CD8-positive, alpha-beta T cell (primary cell): ENCODE measurements at regions of chr15 and their contacts with region 1.

Region 1: GRCh38 chr15:70097337-70098169 is at the start of gene TLE3:
- DNase-seq: peak; percentile 93 to 99 (median 98)
- ATAC-seq: peak; percentile 55
- H3K4me3 ChIP-seq: peak within 1 kb of the TSS; percentile 81 to 89
- H3K4me3 Mint-ChIP-seq: peak within 1 kb of the TSS; percentile 99
- H3K27ac ChIP-seq: peak within 1 kb of the TSS; percentile 90
- H3K27ac Mint-ChIP-seq: peak within 1 kb of the TSS; percentile 98
- H3K4me1 ChIP-seq: peaks cover 51% of the 10 kb centered on the region
- H3K4me1 Mint-ChIP-seq: peaks cover 53% of the 10 kb centered on the region
- H3K27me3 ChIP-seq: peaks cover 0 to 6% of the 10 kb centered on the region in 2 experiments
- H3K27me3 Mint-ChIP-seq: no peaks in the 10 kb centered on the region
- CTCF ChIP-seq: peak; percentile 35
- total RNA-seq, gene TLE3: 198 to 201 TPM

Region 2: DNA sequence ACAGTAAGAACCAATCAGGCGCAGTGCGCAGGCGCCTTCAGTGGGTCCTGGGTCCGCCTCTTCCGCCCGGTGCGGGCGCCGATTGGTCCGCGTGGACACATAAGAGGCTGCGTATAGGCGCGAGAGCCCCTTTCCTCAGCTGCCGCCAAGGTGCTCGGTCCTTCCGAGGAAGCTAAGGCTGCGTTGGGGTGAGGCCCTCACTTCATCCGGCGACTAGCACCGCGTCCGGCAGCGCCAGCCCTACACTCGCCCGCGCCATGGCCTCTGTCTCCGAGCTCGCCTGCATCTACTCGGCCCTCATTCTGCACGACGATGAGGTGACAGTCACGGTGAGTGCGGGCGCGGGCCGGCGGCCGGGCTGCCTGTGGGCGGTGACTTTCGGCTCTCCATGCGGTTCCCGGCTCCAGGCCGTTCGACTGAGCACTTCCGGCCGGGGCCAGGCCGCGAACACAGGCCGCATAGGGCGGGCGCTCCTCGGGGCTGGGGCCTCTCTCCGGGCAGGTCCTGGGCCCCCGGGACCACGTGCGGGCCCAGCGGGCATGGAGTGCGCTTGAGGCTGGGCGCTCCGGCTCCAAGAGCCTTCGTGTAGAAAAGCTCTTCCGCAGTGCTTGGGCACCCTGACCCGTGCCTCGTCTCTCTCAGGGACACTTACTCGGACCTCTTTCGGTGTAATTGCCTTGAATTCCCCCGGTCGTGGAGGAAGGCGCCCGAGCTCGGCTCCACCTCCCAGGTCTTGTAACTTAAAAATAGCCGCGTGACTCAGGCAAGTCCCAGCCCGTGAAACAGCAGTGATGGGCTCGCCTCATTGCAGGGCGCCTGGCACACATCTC is 644.6 kb before region 1 on chr15 and contains the start of gene RPLP1:
- CTCF ChIA-PET with region 1: interaction called, 3 read pairs
- POLR2A ChIA-PET with region 1: interaction called, 5 read pairs
- intact Hi-C with region 1: loop called (anchors 5 kb)
- DNase-seq: peak; percentile 91 to 97 (median 95)
- ATAC-seq: peak; percentile 88
- H3K4me3 ChIP-seq: peak within 1 kb of the TSS; percentile 86 to 91
- H3K4me3 Mint-ChIP-seq: peak within 1 kb of the TSS; percentile 97
- H3K27ac ChIP-seq: peak within 1 kb of the TSS; percentile 75 to 92
- H3K27ac Mint-ChIP-seq: peak within 1 kb of the TSS; percentile 99
- H3K4me1 ChIP-seq: peaks cover 32% of the 10 kb centered on the region
- H3K4me1 Mint-ChIP-seq: peaks cover 47% of the 10 kb centered on the region
- H3K27me3 ChIP-seq: no peaks in the 10 kb centered on the region
- H3K27me3 Mint-ChIP-seq: no peaks in the 10 kb centered on the region
- CTCF ChIP-seq: no peak
- total RNA-seq, gene RPLP1: 2,675 to 2,824 TPM

Region 3: GRCh38 chr15:69713726-69714559 is 383.6 kb before region 1 on chr15:
- CTCF ChIA-PET with region 1: interaction called, 9 read pairs
- POLR2A ChIA-PET with region 1: interaction called, 39 read pairs
- intact Hi-C with region 1: loop called (anchors 1 to 2 kb)
- DNase-seq: peak; percentile 34 to 95 (median 77)
- ATAC-seq: peak; percentile 89
- H3K4me3 ChIP-seq: no peak overlapping the region
- H3K4me3 Mint-ChIP-seq: peak overlapping the region; percentile 20
- H3K27ac ChIP-seq: peak overlapping the region in 1 of 2 experiments; percentile 68
- H3K27ac Mint-ChIP-seq: peak overlapping the region; percentile 89
- H3K4me1 ChIP-seq: peaks cover 47% of the 10 kb centered on the region
- H3K4me1 Mint-ChIP-seq: peaks cover 66% of the 10 kb centered on the region
- H3K27me3 ChIP-seq: no peaks in the 10 kb centered on the region
- H3K27me3 Mint-ChIP-seq: no peaks in the 10 kb centered on the region
- CTCF ChIP-seq: no peak

Region 4: GRCh38 chr15:69760890-69761568 is 336.5 kb before region 1 on chr15:
- CTCF ChIA-PET with region 1: interaction called, 4 read pairs
- POLR2A ChIA-PET with region 1: interaction called, 66 read pairs
- intact Hi-C with region 1: loop called (anchors 1 kb)
- DNase-seq: peak; percentile 51 to 95 (median 82)
- ATAC-seq: peak; percentile 69
- H3K4me3 ChIP-seq: no peak overlapping the region
- H3K4me3 Mint-ChIP-seq: peak overlapping the region; percentile 53
- H3K27ac ChIP-seq: peak overlapping the region in 1 of 2 experiments; percentile 17
- H3K27ac Mint-ChIP-seq: peak overlapping the region; percentile 87
- H3K4me1 ChIP-seq: peaks cover 60% of the 10 kb centered on the region
- H3K4me1 Mint-ChIP-seq: peaks cover 69% of the 10 kb centered on the region
- H3K27me3 ChIP-seq: no peaks in the 10 kb centered on the region
- H3K27me3 Mint-ChIP-seq: no peaks in the 10 kb centered on the region
- CTCF ChIP-seq: no peak

Region 5: DNA sequence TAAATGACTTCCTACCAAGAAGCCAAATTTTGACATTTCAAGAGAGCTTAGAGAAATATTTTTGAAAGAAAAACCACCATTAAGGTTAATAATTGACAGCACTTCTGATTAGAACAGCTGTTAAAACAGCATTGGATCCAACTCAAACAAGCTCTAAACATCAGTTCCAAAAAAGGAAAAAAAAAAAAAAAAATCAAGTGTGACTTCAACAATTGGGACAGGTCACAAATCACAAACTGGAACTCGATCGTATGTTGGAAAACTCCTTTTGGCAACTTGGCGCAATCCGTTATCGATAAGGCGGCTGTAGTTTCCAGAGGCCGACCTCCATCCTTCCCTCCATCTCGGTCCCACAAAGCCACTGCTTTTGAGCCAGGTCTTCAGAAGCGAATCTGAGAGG is 17.7 kb before region 1 on chr15:
- CTCF ChIA-PET with region 1: no interaction called
- POLR2A ChIA-PET with region 1: interaction called, 3 read pairs
- intact Hi-C with region 1: loop called in 1 of 2 experiments (anchors 2 kb)
- DNase-seq: no peak
- ATAC-seq: no peak
- H3K4me3 ChIP-seq: no peak overlapping the region
- H3K4me3 Mint-ChIP-seq: no peak overlapping the region
- H3K27ac ChIP-seq: no peak overlapping the region
- H3K27ac Mint-ChIP-seq: no peak overlapping the region
- H3K4me1 ChIP-seq: peaks cover 24% of the 10 kb centered on the region
- H3K4me1 Mint-ChIP-seq: peaks cover 63% of the 10 kb centered on the region
- H3K27me3 ChIP-seq: no peaks in the 10 kb centered on the region
- H3K27me3 Mint-ChIP-seq: no peaks in the 10 kb centered on the region
- CTCF ChIP-seq: no peak

Region 6: GRCh38 chr15:70528270-70528706 is 430.7 kb after region 1 on chr15:
- CTCF ChIA-PET with region 1: no interaction called
- POLR2A ChIA-PET with region 1: interaction called, 6 read pairs
- intact Hi-C with region 1: loop called in 1 of 2 experiments (anchors 2 kb)
- DNase-seq: peak in 7 of 9 experiments; percentile 42 to 89 (median 67)
- ATAC-seq: peak; percentile 85
- H3K4me3 ChIP-seq: peak overlapping the region; percentile 7 to 40
- H3K4me3 Mint-ChIP-seq: peak overlapping the region; percentile 80
- H3K27ac ChIP-seq: peak overlapping the region; percentile 48 to 69
- H3K27ac Mint-ChIP-seq: peak overlapping the region; percentile 98
- H3K4me1 ChIP-seq: peaks cover 56% of the 10 kb centered on the region
- H3K4me1 Mint-ChIP-seq: peaks cover 80% of the 10 kb centered on the region
- H3K27me3 ChIP-seq: no peaks in the 10 kb centered on the region
- H3K27me3 Mint-ChIP-seq: no peaks in the 10 kb centered on the region
- CTCF ChIP-seq: no peak

Region 7: GRCh38 chr15:70650567-70651302 is 553.2 kb after region 1 on chr15:
- CTCF ChIA-PET with region 1: no interaction called
- POLR2A ChIA-PET with region 1: no interaction called
- intact Hi-C with region 1: no loop called
- DNase-seq: no peak
- ATAC-seq: no peak
- H3K4me3 ChIP-seq: no peak overlapping the region
- H3K4me3 Mint-ChIP-seq: no peak overlapping the region
- H3K27ac ChIP-seq: no peak overlapping the region
- H3K27ac Mint-ChIP-seq: no peak overlapping the region
- H3K4me1 ChIP-seq: no peaks in the 10 kb centered on the region
- H3K4me1 Mint-ChIP-seq: no peaks in the 10 kb centered on the region
- H3K27me3 ChIP-seq: no peaks in the 10 kb centered on the region
- H3K27me3 Mint-ChIP-seq: peaks cover 2% of the 10 kb centered on the region
- CTCF ChIP-seq: no peak

Region 8: DNA sequence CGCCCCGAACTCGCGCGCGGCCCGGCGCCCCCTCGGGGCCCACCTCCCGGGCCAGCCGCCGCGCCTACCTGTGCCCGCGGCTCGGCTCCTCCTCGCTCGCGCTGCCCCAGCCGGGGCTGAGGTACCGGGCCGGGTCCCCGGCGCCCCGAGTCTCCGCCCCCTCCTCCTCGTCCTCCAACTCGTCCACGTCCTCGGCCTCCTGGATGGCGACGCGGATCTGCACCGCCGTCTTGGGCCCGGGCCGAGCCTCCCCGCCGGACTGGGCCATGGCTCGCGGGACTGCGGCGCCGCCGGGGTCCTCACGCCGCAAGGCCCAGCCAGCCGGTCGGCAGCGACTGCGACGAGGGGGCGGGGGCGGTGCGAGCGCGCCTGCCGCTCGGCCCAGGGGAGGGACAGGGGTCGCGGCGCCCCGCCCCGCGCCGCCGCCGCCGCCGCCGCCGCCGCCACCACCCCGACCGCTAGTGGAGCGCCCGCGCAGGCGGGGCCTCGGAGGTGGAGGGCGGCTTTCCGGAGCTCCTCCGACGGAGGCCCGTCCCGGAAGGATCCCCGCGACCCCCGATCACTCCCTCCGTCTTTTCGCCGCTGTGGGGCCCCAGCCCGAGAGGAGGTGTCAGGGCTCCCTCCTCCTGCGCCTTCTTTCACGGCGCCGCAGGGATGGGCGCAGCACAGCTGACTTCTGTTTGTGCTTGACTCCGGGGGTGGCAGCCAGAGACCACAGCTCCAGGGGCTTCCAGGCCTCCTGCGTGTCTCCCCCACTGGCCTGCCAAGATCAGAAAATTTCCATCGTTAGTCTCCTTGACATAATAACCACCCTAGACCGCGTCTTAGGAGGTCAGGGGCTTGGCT is 756.5 kb after region 1 on chr15 and contains the start of gene LARP6:
- CTCF ChIA-PET with region 1: no interaction called
- POLR2A ChIA-PET with region 1: no interaction called
- intact Hi-C with region 1: no loop called
- DNase-seq: peak in 5 of 9 experiments; percentile 17 to 56 (median 20)
- ATAC-seq: peak; percentile 48
- H3K4me3 ChIP-seq: peak within 1 kb of the TSS; percentile 28 to 39
- H3K4me3 Mint-ChIP-seq: peak within 1 kb of the TSS; percentile 82
- H3K27ac ChIP-seq: no peak within 1 kb of the TSS
- H3K27ac Mint-ChIP-seq: no peak within 1 kb of the TSS
- H3K4me1 ChIP-seq: no peaks in the 10 kb centered on the region
- H3K4me1 Mint-ChIP-seq: peaks cover 6% of the 10 kb centered on the region
- H3K27me3 ChIP-seq: peaks cover 0 to 8% of the 10 kb centered on the region in 2 experiments
- H3K27me3 Mint-ChIP-seq: peaks cover 44% of the 10 kb centered on the region
- CTCF ChIP-seq: no peak
- total RNA-seq, gene LARP6: not detected